ENCODE measurements at regions of chrX and their contacts with region 1.

Region 1: DNA sequence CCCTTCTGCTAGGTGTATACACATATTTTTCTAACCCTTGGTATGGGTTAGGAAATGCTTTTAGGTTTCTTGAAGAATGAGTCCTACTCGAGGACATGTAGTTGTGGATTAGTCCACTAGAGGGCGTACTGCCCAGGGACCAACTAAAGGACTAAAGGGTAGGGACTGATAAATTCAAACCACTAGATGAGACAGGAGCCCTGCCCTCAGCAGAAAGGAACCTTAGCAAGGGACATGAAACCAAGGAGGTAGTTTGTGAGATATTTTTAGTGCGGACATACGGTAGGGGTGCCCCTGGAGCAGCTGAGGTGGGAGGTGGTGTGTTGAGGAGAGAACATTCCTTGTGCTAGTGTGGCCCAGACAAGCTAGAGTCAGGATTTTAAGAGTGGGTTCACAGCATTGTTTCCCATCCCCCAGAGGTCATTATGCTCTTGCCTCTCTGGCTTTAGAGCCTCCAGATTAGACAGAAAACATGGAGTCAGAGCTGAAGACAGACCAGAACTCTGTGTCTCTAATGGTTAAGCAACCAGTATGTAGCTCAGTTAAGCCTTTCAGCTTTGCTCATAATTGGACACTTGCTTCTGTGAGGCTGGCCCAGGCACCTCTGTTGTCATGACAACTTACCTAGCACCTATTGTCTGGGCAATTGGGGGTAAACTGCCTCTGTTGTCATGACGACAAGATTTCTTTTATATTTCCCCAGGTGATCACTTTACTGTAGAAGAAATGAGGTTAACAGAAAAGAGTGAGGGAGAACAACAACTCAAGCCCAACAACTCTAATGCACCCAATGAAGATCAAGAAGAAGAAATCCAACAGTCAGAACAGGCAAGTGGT is 1.0 kb downstream of the TMEM31 start:
- DNase-seq: peak in 1 of 2 donors; percentile 23
- ATAC-seq: peak in 2 of 8 donors; percentile 27 to 59
- H3K4me3 ChIP-seq: no peak overlapping the region
- H3K27ac ChIP-seq: no peak overlapping the region
- H3K4me1 ChIP-seq: no peaks in the 10 kb centered on the region
- H3K27me3 ChIP-seq: no peaks in the 10 kb centered on the region
- CTCF ChIP-seq: peak; percentile 17 to 76 (median 62)

Region 2: DNA sequence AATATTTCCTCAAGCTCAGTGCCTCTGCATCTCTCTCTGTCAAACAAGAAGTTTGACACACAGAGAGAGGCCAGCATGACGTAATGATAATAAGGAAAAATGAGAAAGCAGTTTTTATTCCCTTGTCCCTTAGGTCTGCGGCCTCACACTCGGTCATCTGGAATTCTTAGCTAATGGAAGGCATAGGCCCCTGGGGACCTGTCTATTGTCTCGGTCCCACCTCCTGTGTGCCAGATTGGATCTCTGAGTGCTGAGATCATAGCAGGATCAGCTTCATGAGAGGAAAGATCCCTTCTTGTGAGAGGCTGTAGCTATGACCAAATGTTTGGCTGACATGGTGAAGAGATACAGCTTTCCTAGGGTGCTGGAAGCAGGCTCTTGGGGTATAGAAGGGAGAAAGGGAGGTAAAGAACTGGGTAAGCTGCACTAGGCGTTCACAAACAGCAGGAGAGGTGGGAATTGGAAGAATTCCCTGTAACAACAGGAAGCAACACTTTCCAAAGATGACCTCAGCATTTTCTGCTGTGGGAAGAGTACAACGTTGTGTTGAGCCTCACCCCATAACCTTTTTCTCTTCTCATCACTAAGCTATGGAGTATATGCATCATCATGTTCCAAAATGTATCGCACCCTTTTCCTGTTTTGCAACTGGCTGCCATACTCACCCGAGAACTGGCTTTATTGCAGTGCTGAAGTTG is 19.2 kb after region 1 on chrX:
- intact Hi-C with region 1: loop called in 1 of 10 experiments (anchors 1 kb)
- DNase-seq: peak in 1 of 2 donors; percentile 48
- ATAC-seq: peak in 7 of 8 donors; percentile 84 to 93 (median 88)
- H3K4me3 ChIP-seq: no peak overlapping the region
- H3K27ac ChIP-seq: peak overlapping the region in 9 of 10 donors; percentile 22 to 79 (median 57)
- H3K4me1 ChIP-seq: peaks cover 0 to 20% (median 10%) of the 10 kb centered on the region in 9 donors
- H3K27me3 ChIP-seq: peaks cover 0 to 64% (median 0%) of the 10 kb centered on the region in 7 donors
- CTCF ChIP-seq: no peak

Region 3: DNA sequence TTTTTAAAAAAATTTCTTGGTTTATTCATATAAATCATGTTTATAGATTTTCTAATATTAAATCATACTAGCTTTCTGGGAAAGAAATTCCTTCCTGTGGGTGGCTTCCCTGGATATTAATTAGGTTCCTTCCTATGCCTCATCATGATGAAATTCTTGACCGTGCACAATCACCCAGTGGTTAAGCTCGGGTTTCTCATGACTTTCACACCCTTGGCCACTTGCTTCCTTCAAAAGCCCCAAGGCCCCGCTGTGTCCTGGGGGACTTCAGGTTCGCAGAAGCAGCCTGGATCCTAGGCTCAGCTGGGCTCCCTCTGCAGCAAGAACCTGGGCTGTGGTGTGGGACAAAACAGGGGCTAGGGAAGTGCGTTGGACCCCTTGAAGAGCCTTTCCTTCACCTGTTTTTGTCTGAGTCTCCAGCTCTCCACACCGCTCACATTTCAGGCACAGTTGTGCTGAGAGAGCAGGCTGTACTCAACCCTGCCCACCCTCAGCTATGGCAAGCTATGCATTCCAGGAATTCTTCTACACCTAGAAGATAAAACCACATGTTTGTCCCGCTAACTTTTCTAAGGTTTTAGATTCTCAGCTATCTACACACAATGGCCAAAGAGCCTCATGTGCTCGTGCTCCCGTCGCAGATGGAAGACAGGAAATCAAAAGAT is 201.7 kb after region 1 on chrX:
- intact Hi-C with region 1: no loop called
- DNase-seq: no peak
- ATAC-seq: no peak
- H3K4me3 ChIP-seq: no peak overlapping the region
- H3K27ac ChIP-seq: no peak overlapping the region
- H3K4me1 ChIP-seq: peaks cover 0 to 4% (median 0%) of the 10 kb centered on the region in 9 donors
- H3K27me3 ChIP-seq: peaks cover 0 to 33% (median 0%) of the 10 kb centered on the region in 7 donors
- CTCF ChIP-seq: no peak